Endothelial cell of umbilical vein (primary cell): ENCODE measurements at regions of chr22 and their contacts with region 1.

Region 1: GRCh38 chr22:48699511-48699910 is 1128.2 kb downstream of the BRD1 start:
- DNase-seq: no peak
- H3K4me3 ChIP-seq: no peak overlapping the region
- H3K27ac ChIP-seq: no peak overlapping the region
- H3K4me1 ChIP-seq: no peaks in the 10 kb centered on the region
- H3K27me3 ChIP-seq: no peaks in the 10 kb centered on the region
- CTCF ChIP-seq: no peak
- POLR2A ChIP-seq: no peak

Region 2: GRCh38 chr22:48434156-48434867 is 265.2 kb before region 1 on chr22:
- CTCF ChIA-PET with region 1: no interaction called
- POLR2A ChIA-PET with region 1: interaction called, 11 read pairs
- dilution Hi-C with region 1: no loop called
- intact Hi-C with region 1: no loop called
- DNase-seq: no peak
- H3K4me3 ChIP-seq: no peak overlapping the region
- H3K27ac ChIP-seq: no peak overlapping the region
- H3K4me1 ChIP-seq: no peaks in the 10 kb centered on the region
- H3K27me3 ChIP-seq: no peaks in the 10 kb centered on the region
- CTCF ChIP-seq: no peak
- POLR2A ChIP-seq: no peak